ENCODE measurements at regions of chr19 and their contacts with region 1.

Region 1: GRCh38 chr19:45336696-45337251 is 3.8 kb upstream of the KLC3 start:
- DNase-seq: no peak
- ATAC-seq: no peak
- H3K4me3 ChIP-seq: no peak overlapping the region
- H3K27ac ChIP-seq: no peak overlapping the region
- H3K4me1 ChIP-seq: no peaks in the 10 kb centered on the region
- H3K27me3 ChIP-seq: no peaks in the 10 kb centered on the region

Region 2: DNA sequence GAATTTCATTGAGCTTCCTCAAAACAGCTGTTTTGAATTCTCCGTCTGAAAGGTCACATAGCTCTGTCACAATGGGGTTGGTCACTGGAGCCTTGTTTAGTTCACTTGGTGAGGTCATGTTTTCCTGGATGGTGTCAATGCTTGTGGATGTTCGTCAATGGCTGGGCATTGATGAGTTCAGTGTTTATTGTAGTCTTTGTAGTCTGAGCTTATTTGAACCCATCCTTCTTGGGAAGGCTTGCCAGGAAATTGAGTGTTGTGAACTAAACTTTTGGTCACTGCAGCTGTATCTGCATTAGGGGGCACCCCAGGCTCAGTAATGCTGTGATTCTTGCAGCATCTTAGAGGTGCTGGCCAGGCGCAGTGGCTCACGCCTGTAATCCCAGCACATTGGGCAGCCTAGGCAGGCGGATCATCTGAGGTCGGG is 136.2 kb before region 1 on chr19:
- intact Hi-C with region 1: loop called in 1 of 4 experiments (anchors 5 kb)
- DNase-seq: peak; percentile 47 to 66 (median 53)
- ATAC-seq: peak; percentile 79 to 87
- H3K4me3 ChIP-seq: no peak overlapping the region
- H3K27ac ChIP-seq: no peak overlapping the region
- H3K4me1 ChIP-seq: no peaks in the 10 kb centered on the region
- H3K27me3 ChIP-seq: no peaks in the 10 kb centered on the region

Region 3: DNA sequence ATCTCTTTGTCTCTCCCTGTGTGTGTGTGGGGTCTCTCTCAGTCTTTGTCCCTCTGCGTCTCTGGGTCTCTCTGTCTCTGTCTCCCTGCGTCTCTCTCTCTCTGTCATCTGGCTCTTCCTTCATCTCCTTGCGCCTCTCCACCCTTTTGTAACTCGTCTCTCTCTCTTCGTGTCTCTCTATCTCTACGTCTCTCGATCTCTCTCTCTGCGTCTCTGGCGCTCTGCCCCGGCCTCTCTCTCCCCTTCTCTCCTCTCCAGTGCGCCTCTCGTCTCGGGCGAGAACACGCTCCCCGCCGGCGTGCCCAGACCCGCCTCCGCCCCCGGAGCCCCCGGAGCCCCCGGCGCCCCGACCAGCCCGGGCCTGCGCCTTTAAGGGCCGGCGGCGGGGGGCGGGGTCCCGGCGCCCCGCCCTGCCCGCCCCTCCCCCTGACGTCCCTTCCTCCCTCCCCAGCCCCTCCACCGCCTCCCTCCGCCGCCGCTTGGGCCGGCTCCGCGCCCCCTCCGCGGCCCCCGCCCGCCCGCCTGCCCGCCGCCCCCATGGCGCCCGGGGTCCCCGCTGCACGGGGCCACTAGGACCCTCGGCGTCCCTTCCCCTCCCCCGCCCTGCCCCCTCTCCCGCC is 85.8 kb before region 1 on chr19 and contains the start of gene MARK4:
- intact Hi-C with region 1: loop called in 1 of 4 experiments (anchors 5 kb)
- DNase-seq: peak; percentile 51 to 82 (median 79)
- ATAC-seq: peak; percentile 58 to 68
- H3K4me3 ChIP-seq: peak within 1 kb of the TSS; percentile 100
- H3K27ac ChIP-seq: peak within 1 kb of the TSS; percentile 52
- H3K4me1 ChIP-seq: peaks cover 10% of the 10 kb centered on the region
- H3K27me3 ChIP-seq: no peaks in the 10 kb centered on the region
- total RNA-seq, gene MARK4: 29.0 to 54.5 (median 40.4) TPM

Region 4: GRCh38 chr19:45264781-45265317 is 71.9 kb before region 1 on chr19:
- intact Hi-C with region 1: no loop called
- DNase-seq: no peak
- ATAC-seq: peak; percentile 10 to 12
- H3K4me3 ChIP-seq: no peak overlapping the region
- H3K27ac ChIP-seq: no peak overlapping the region
- H3K4me1 ChIP-seq: no peaks in the 10 kb centered on the region
- H3K27me3 ChIP-seq: no peaks in the 10 kb centered on the region

Region 5: GRCh38 chr19:45526143-45526542 is 189.4 kb after region 1 on chr19:
- intact Hi-C with region 1: no loop called
- DNase-seq: peak; percentile 76 to 89 (median 88)
- ATAC-seq: peak; percentile 52 to 60
- H3K4me3 ChIP-seq: no peak overlapping the region
- H3K27ac ChIP-seq: peak overlapping the region; percentile 63
- H3K4me1 ChIP-seq: peaks cover 4% of the 10 kb centered on the region
- H3K27me3 ChIP-seq: no peaks in the 10 kb centered on the region

Measured in right cardiac atrium (tissue), 5 donors.